Activated naive CD4-positive, alpha-beta T cell treated with anti-CD3 and anti-CD28 coated beads, Interleukin-2, amount 10 ng/mL, durations not matched to agents 7 days and 5 days (primary cell): ENCODE measurements at regions of chr4 and their contacts with region 1.

Region 1: GRCh38 chr4:6701371-6701770 is 7.7 kb downstream of the S100P start:
- DNase-seq: peak; percentile 60
- H3K4me3 Mint-ChIP-seq: no peak overlapping the region
- H3K27ac Mint-ChIP-seq: no peak overlapping the region
- H3K4me1 Mint-ChIP-seq: peaks cover 82% of the 10 kb centered on the region
- H3K27me3 Mint-ChIP-seq: no peaks in the 10 kb centered on the region

Region 2: GRCh38 chr4:6105311-6105911 is 596.0 kb before region 1 on chr4:
- CTCF ChIA-PET with region 1: no interaction called
- DNase-seq: no peak
- H3K4me3 Mint-ChIP-seq: no peak overlapping the region
- H3K27ac Mint-ChIP-seq: no peak overlapping the region
- H3K4me1 Mint-ChIP-seq: no peaks in the 10 kb centered on the region
- H3K27me3 Mint-ChIP-seq: peaks cover 22% of the 10 kb centered on the region

Region 3: GRCh38 chr4:6688879-6689505 is 12.4 kb before region 1 on chr4:
- CTCF ChIA-PET with region 1: interaction called, 14 read pairs
- DNase-seq: peak; percentile 87
- H3K4me3 Mint-ChIP-seq: peak overlapping the region; percentile 82
- H3K27ac Mint-ChIP-seq: peak overlapping the region; percentile 99
- H3K4me1 Mint-ChIP-seq: peaks cover 81% of the 10 kb centered on the region
- H3K27me3 Mint-ChIP-seq: no peaks in the 10 kb centered on the region

Region 4: DNA sequence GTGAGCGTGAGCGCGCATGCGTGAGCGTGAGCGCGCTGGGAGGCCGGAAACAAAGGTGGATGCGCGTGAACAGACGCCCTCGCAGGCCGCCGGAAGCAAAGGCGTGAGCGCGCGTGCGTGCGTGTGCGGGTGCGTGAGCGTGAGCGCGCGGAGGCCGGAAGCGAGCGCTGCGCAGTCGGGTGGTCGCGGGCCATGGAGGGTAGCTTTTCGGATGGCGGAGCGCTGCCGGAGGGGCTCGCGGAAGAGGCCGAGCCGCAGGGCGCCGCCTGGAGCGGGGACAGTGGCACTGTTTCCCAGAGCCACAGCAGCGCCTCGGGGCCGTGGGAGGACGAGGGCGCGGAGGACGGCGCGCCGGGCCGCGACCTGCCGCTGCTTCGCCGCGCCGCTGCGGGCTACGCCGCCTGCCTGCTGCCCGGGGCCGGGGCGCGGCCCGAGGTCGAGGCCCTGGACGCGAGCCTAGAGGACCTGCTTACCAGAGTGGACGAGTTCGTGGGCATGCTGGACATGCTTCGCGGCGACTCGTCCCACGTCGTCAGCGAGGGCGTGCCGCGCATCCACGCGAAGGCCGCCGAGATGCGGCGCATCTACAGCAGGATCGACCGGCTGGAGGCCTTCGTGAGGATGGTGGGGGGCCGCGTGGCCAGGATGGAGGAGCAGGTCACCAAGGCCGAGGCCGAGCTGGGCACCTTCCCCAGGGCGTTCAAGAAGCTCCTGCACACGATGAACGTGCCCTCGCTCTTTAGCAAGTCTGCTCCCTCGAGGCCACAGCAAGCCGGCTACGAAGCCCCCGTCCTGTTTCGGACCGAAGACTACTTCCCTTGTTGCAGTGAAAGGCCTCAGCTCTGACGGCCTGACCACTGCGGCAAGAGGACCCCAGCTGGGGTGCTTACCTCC is 14.9 kb after region 1 on chr4 and contains the start of gene BLOC1S4:
- CTCF ChIA-PET with region 1: interaction called, 16 read pairs
- DNase-seq: peak; percentile 89
- H3K4me3 Mint-ChIP-seq: peak within 1 kb of the TSS; percentile 89
- H3K27ac Mint-ChIP-seq: peak within 1 kb of the TSS; percentile 96
- H3K4me1 Mint-ChIP-seq: peaks cover 34% of the 10 kb centered on the region
- H3K27me3 Mint-ChIP-seq: peaks cover 15% of the 10 kb centered on the region